OCI-LY7 (cell line): ENCODE measurements at regions of chr19 and their contacts with region 1.

Region 1: GRCh38 chr19:17932485-17933338 is at the start of gene CCDC124:
- DNase-seq: peak; percentile 96
- H3K4me3 ChIP-seq: peak within 1 kb of the TSS; percentile 92
- H3K27ac ChIP-seq: peak within 1 kb of the TSS; percentile 58
- H3K4me1 ChIP-seq: peaks cover 14% of the 10 kb centered on the region
- CTCF ChIP-seq: peak; percentile 98
- total RNA-seq, gene CCDC124: 57.5 and 68.2 TPM in 2 replicates

Region 2: GRCh38 chr19:17718947-17719711 is 213.6 kb before region 1 on chr19 and contains the start of gene MAP1S:
- CTCF ChIA-PET with region 1: no interaction called
- POLR2A ChIA-PET with region 1: no interaction called
- intact Hi-C with region 1: no loop called
- DNase-seq: peak; percentile 81
- H3K4me3 ChIP-seq: peak within 1 kb of the TSS; percentile 95
- H3K27ac ChIP-seq: peak within 1 kb of the TSS; percentile 20
- H3K4me1 ChIP-seq: peaks cover 33% of the 10 kb centered on the region
- CTCF ChIP-seq: no peak
- total RNA-seq, gene MAP1S: 11.5 and 31.6 TPM in 2 replicates

Region 3: GRCh38 chr19:17873786-17874757 is 58.6 kb before region 1 on chr19:
- CTCF ChIA-PET with region 1: no interaction called
- POLR2A ChIA-PET with region 1: interaction called, 3 read pairs
- intact Hi-C with region 1: loop called (anchors 2 kb)
- DNase-seq: peak; percentile 78
- H3K4me3 ChIP-seq: peak overlapping the region; percentile 65
- H3K27ac ChIP-seq: no peak overlapping the region
- H3K4me1 ChIP-seq: peaks cover 14% of the 10 kb centered on the region
- CTCF ChIP-seq: no peak